ENCODE measurements at regions of chrX and their contacts with region 1.

Region 1: DNA sequence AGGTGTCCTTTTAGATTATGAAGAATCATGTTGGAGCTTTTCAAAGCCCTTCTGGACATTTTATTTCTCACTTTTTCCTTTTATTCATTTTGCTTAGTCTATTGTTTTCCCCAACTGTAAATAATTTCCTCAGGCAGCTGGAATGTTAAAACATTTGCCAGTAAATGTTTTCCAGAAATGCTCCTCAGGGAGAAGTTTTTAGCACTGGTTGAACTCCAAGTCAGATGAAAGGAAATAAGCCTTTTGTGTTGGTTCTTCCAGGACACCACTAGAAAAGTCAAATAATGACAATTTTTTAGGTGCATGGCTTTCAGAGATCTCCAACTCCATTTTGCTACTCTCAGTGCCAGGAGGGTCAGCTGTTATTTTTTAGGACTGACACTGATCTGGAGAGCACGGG is 127.9 kb downstream of the IL13RA2 start:
- DNase-seq: no peak

Region 2: DNA sequence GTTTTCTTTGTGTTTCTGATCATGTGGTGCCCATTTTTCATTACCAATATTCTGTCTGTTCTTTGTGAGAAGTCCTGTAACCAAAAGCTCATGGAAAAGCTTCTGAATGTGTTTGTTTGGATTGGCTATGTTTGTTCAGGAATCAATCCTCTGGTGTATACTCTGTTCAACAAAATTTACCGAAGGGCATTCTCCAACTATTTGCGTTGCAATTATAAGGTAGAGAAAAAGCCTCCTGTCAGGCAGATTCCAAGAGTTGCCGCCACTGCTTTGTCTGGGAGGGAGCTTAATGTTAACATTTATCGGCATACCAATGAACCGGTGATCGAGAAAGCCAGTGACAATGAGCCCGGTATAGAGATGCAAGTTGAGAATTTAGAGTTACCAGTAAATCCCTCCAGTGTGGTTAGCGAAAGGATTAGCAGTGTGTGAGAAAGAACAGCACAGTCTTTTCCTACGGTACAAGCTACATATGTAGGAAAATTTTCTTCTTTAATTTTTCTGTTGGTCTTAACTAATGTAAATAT is 17.6 kb after region 1 on chrX:
- CTCF ChIA-PET with region 1: interaction called, 10 read pairs
- POLR2A ChIA-PET with region 1: no interaction called
- DNase-seq: no peak

Region 3: DNA sequence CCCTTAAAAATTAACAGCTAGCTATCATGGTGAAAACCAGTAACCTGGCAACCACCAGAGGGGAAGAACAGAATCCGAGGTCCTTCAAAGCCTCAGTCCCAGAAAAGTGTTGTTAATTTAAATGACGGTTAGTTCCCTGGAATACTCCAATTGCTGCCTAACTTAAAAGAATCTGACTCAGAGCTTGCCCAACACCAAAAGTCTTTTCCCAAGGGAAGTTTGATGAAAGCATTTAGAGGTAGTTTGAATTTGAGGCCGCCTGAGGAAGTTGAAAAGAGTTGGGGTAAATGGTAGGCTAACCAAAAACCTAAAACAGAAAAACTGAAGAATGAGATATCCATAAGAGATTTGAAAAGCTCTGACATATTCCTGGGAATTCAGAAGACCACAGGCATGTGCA is 81.3 kb after region 1 on chrX:
- CTCF ChIA-PET with region 1: no interaction called
- POLR2A ChIA-PET with region 1: no interaction called
- DNase-seq: no peak

Measured in HEK293T (cell line).